ENCODE measurements at regions of chr6 and their contacts with region 1.

Region 1: DNA sequence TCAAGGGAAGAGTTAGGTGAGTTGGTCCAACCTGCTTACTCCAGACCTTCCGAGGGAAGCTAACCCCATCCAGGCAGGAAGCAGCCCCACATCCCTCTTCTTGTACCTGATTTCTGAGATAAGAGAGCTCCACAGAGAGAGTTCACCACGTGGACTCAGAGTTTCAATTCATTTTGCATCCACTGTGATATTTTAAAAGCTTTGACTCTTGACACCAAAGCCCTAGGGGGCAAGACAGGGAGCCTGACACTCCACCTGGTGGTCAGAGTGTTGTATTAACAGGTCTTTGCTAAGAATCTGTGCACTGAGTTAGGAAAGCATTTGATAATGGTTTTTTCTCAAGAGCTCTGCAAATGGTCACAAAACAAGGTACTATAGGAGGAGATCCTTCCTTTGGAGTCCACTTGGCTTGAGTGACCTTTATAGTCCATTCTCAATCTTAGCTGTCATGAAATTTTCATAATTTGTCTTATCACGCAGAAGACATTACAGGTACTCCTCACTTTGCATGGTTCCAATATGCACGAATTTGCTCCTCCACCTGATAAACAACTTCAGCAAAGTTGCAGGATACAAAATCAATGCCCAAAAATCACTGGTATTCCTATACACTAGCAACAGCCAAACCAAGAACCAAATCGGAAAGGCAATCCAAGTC is 56.2 kb upstream of the RIPOR2 start:
- DNase-seq: peak in 1 of 2 donors; percentile 33
- ATAC-seq: peak; percentile 76 to 96
- H3K4me3 ChIP-seq: no peak overlapping the region
- H3K27ac ChIP-seq: no peak overlapping the region
- H3K4me1 ChIP-seq: no peaks in the 10 kb centered on the region
- H3K27me3 ChIP-seq: no peaks in the 10 kb centered on the region
- CTCF ChIP-seq: peak; percentile 69 to 81 (median 76)
- POLR2A ChIP-seq: no peak

Region 2: DNA sequence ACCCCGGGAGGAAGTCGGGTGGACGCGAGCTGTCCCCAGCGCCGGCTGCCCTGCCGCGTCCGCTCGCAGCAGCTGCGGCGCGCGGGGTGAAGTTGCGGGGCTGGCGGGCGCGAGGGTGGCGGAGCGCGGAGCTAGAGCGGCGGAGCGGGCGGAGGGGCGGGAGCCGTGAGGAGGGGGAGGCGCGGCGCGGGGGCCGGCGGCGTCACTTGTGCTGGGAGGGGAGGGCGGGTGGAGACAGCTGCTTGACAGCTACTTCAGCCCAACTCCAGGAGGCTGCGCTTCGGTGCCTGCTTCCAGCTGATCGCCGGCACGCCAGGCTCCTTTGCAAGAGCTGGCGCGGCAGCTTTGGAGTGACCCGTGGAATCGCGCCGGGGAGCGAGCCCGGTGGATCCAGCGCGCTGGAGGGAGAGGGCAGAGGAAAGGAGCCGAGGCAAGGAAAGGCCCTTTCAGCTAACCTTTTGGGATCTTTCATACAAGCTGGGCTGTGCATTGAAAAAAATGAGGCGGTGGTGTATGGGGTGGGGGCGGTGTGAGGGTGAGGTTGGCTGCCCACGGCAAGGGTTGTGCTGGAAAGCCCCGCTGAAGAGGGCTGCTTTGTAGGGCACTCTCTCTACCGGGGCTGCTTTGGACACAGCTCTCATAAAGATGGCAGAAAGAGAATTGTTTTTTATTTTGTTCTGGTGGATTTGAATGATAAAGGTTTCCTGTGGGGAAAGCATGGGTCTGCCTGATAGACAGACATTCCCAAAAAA is 80.8 kb before region 1 on chr6:
- in situ Hi-C with region 1: no loop called
- intact Hi-C with region 1: loop called (anchors 5 kb)
- DNase-seq: peak; percentile 66 to 85
- ATAC-seq: peak; percentile 61 to 69
- H3K4me3 ChIP-seq: peak overlapping the region; percentile 59 to 82 (median 72)
- H3K27ac ChIP-seq: peak overlapping the region; percentile 87 to 93 (median 89)
- H3K4me1 ChIP-seq: peaks cover 36% of the 10 kb centered on the region in 2 donors
- H3K27me3 ChIP-seq: no peaks in the 10 kb centered on the region
- CTCF ChIP-seq: no peak
- POLR2A ChIP-seq: peak; percentile 52 to 66

Region 3: DNA sequence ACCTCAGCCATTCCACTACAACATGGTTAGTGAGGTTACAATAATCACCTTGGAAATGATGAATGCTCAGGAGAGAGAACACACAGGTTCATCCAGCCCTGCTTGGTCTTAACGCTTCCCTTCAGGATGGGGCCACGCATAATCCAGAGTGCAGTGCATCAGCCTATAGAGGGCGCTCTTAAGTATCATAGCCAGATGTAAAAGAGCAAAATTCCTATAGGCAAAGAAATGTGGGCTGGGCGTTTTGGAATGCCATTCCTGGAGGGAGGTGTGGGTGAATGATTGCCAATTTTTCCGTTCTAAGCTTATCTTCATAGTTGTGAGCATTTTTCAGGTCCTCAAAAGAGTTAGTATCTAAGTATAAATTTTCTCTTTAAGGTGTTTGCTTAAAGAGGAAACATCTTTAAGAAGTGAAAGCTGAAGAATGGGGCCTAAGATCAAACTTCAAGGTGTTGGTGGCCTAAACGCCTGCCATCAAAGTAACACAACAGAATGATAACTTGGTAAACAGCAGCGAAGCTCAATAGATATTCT is 58.0 kb before region 1 on chr6:
- in situ Hi-C with region 1: no loop called
- intact Hi-C with region 1: loop called (anchors 5 kb)
- DNase-seq: no peak
- ATAC-seq: no peak
- H3K4me3 ChIP-seq: no peak overlapping the region
- H3K27ac ChIP-seq: no peak overlapping the region
- H3K4me1 ChIP-seq: peaks cover 23 to 28% of the 10 kb centered on the region in 2 donors
- H3K27me3 ChIP-seq: no peaks in the 10 kb centered on the region
- CTCF ChIP-seq: peak in 2 of 5 experiments; percentile 24 to 49
- POLR2A ChIP-seq: no peak

Region 4: GRCh38 chr6:25193460-25194171 is 201.7 kb after region 1 on chr6:
- in situ Hi-C with region 1: no loop called
- intact Hi-C with region 1: no loop called
- DNase-seq: peak in 1 of 2 donors; percentile 26
- ATAC-seq: peak; percentile 58 to 64
- H3K4me3 ChIP-seq: no peak overlapping the region
- H3K27ac ChIP-seq: peak overlapping the region; percentile 43 to 70 (median 58)
- H3K4me1 ChIP-seq: peaks cover 4 to 6% of the 10 kb centered on the region in 2 donors
- H3K27me3 ChIP-seq: no peaks in the 10 kb centered on the region
- CTCF ChIP-seq: no peak
- POLR2A ChIP-seq: no peak

Measured in gastrocnemius medialis (tissue), 4 donors.